Right cardiac atrium (tissue), 5 donors: ENCODE measurements at regions of chr5 and their contacts with region 1.

Region 1: GRCh38 chr5:142063878-142064331 is 44.7 kb upstream of the NDFIP1 start:
- DNase-seq: peak; percentile 94 to 95 (median 95)
- ATAC-seq: peak; percentile 90 to 92
- H3K4me3 ChIP-seq: no peak overlapping the region
- H3K27ac ChIP-seq: peak overlapping the region; percentile 70
- H3K4me1 ChIP-seq: peaks cover 5% of the 10 kb centered on the region
- H3K27me3 ChIP-seq: no peaks in the 10 kb centered on the region

Region 2: DNA sequence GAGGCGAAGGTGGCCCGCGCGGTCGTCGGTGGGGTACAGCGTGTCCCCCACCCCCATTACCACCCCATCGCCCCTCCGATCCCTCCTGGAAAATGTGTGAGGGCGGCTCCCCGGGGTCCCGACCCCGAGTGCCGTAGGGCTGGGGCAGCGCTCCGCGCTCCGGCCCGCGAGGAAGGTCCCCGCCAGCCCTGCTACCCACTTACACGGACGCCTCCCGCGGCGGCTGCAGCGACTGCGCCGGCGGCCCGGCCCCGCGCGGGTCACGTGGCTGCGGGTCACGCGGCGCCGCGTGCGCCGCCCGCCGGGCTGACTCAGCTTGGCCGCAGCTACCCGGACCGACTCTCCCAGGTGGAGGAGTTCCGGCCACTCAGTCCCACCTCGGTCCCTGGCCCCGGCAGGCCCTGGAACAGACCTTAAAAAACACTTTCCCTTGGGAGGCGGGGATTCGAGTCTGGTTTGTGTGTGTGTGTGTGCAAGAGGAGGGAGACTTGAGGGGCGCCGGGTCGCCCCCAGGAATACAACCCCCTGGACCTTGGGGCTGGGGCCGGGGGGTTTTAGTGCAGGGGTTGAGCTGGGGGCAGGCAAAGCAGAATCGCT is 51.0 kb before region 1 on chr5 and contains the start of gene GNPDA1:
- intact Hi-C with region 1: loop called in 1 of 4 experiments (anchors 10 kb)
- DNase-seq: peak; percentile 83 to 94 (median 93)
- ATAC-seq: peak; percentile 88 to 93
- H3K4me3 ChIP-seq: peak within 1 kb of the TSS; percentile 70
- H3K27ac ChIP-seq: peak within 1 kb of the TSS; percentile 73
- H3K4me1 ChIP-seq: peaks cover 4% of the 10 kb centered on the region
- H3K27me3 ChIP-seq: no peaks in the 10 kb centered on the region
- total RNA-seq, gene GNPDA1: 16.9 to 22.5 (median 19.2) TPM

Region 3: DNA sequence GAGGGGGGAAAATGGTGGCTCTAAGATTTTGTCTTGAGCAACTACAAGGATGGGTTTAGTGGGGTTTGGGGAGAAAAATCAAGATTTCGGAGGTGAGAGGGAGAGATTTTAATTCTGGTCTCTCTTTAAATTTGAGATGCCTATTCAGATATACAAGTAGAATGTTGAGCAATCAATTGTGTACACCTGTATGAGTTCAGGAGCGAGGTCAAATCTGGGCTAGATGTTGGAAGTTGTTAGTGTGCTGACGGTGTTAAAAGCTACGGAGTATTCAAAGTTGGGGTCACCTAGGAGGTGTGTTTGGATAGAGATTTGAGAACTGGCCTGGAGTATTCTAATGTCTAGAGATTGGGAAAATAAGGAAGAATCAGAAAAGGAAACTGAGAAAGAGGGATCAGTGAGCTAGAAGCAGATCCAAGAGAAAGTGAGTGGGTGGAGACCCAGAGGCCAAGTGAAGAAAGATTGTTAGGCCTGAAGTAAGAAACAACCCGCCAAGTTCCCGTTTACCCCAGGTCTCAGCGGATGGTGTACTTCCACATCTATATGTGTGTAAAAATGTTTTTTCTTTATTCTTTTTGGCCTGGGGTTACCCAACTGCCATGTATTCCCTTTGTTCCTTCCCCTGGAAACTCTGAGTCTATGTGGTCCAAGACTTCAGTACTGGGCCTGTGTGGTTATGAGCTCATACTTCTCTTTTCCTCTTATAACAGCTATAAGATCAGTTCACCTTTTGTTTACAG is 694.3 kb after region 1 on chr5:
- intact Hi-C with region 1: no loop called
- DNase-seq: no peak
- ATAC-seq: peak in 1 of 2 donors; percentile 29
- H3K4me3 ChIP-seq: no peak overlapping the region
- H3K27ac ChIP-seq: no peak overlapping the region
- H3K4me1 ChIP-seq: peaks cover 11% of the 10 kb centered on the region
- H3K27me3 ChIP-seq: no peaks in the 10 kb centered on the region